Mammary epithelial cell (primary cell): ENCODE measurements at regions of chr15 and their contacts with region 1.

Region 1: DNA sequence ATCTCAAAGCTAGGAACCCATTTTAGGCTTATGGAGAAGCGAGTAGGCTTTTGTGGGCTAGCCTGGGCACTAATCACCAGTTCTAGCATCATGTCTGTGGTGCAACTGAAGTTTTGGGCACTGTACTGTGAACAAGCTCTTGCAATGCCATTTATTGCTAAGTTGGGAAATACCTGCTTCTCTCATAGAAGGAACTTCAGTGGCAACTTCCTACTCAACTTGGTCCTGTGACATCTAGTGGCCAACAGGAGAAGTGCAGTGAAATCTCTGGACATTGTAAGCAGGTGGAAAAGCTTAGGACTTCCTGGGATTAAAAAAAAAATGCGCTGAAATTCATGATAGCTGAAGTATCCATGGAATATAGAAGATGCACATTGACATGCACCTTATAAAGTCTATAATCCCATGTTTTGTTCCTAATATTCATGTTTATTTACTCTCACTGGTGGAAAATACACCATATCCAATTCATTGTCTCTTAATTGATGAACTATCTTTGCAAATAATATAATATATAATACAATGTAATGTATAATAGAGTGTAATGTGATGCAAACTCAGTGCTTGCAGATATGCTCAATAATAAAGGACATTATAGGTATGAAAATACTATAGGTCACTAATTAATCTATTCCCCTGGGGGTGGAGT is 6.5 kb upstream of the ALDH1A3 start:
- DNase-seq: peak; percentile 85
- H3K4me3 ChIP-seq: no peak overlapping the region
- H3K27ac ChIP-seq: no peak overlapping the region
- H3K4me1 ChIP-seq: peaks cover 13% of the 10 kb centered on the region
- H3K27me3 ChIP-seq: no peaks in the 10 kb centered on the region
- CTCF ChIP-seq: peak; percentile 89 to 92

Region 2: DNA sequence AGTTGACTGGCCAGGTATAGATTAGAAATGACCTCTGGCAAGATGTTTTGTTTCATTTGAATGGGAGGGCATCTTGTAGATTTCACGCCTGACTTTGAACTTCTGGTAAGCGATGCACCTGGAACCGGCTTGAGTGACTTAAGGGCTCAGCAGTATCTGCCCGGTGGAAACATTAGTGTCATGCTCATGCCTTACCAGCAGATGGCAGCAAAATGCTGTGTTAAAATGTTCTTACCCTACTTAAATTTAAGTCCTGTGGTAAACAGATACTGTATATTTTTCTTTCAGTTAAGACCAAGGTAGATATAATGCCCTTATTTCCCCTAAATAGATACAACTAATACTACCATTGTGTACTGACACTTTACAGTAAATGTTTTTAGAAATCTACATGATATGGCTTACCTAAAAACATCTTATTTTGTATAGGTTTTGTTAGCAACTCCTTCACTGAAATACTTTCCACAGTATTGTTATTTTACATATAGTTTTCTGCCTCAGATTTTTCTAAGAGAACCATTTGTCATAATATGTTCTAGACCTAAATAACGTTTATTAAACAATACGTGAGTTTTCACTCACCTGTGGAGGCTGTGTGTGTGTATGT is 245.3 kb before region 1 on chr15:
- CTCF ChIA-PET with region 1: no interaction called
- dilution Hi-C with region 1: no loop called
- in situ Hi-C with region 1: loop called in 1 of 2 experiments (anchors 10 kb)
- intact Hi-C with region 1: loop called (anchors 1 kb)
- DNase-seq: peak; percentile 64
- H3K4me3 ChIP-seq: no peak overlapping the region
- H3K27ac ChIP-seq: peak overlapping the region; percentile 5
- H3K4me1 ChIP-seq: no peaks in the 10 kb centered on the region
- H3K27me3 ChIP-seq: no peaks in the 10 kb centered on the region
- CTCF ChIP-seq: peak; percentile 73

Region 3: DNA sequence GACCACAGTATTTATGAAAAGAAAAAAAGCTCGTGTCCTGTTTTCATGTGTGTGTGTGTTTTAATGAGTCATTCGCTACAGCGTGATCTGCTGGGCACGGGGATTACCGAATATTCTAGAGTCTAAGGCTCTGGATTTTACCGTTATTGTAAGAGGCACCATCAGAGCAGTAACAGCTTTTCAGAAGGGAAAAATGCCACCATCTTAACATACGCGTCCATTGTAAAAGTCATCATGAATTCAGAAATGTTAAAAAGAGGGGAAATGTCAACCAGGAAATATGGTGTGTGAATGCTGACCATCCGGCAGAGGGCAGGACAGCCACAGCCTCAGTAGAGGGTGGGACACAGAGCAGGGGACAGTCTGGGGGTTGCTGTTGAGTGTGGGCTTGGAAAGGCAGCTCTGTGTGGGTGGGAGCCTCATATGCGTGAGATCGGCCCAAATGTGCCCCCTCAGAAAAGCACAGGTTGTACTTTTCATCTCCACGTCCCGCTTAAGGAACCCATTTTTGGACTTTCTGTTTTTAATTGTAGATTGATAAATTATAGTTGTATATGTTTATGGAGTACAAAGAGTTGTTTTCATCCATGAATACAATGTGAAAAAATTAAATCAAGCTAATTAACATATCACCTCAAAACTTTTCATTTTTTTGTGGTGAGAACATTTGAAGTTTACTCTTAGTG is 201.2 kb before region 1 on chr15:
- CTCF ChIA-PET with region 1: no interaction called
- dilution Hi-C with region 1: no loop called
- in situ Hi-C with region 1: no loop called
- intact Hi-C with region 1: loop called (anchors 1 kb)
- DNase-seq: peak; percentile 49
- H3K4me3 ChIP-seq: no peak overlapping the region
- H3K27ac ChIP-seq: peak overlapping the region; percentile 37
- H3K4me1 ChIP-seq: peaks cover 7% of the 10 kb centered on the region
- H3K27me3 ChIP-seq: no peaks in the 10 kb centered on the region
- CTCF ChIP-seq: peak; percentile 44 to 66

Region 4: DNA sequence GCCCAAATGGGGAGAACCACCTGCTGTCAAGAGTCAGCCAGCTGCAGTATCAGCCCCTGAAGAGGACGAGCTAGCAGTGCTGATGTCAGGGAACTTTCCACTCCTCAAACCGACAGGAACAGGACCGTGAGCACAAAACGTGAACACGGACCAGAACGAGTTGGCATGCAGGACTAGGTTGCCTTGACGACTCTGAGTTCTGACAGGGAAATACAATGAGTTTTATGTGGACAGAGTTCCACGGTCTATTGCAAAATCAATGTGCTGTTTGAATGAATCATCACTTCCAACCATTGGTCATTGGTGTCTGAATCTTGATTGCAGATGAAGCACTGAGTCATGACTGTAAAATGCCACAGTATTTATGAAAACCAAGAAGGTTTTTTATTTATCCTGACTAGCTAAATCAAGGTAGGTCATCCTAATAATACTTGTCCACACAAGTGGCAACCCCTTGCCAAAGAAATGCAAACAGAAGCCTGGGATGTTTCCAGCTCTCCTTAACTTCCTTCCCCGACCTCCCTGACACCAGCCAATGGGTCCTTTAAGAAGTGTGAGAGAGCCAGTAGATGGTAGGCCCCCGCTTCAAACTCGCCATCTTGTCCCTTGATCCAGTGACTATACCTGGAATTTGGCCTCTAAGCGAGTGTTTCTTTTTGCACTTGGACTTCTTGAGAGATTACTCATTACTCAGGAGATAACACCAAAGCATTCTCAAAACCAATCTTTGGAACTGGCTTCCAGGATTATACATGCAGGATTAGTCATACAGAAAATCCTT is 151.2 kb before region 1 on chr15:
- CTCF ChIA-PET with region 1: interaction called, 4 read pairs
- dilution Hi-C with region 1: no loop called
- in situ Hi-C with region 1: loop called in 1 of 2 experiments (anchors 10 kb)
- intact Hi-C with region 1: loop called (anchors 1 kb)
- DNase-seq: peak; percentile 100
- H3K4me3 ChIP-seq: peak overlapping the region in 1 of 3 experiments; percentile 15
- H3K27ac ChIP-seq: peak overlapping the region; percentile 100
- H3K4me1 ChIP-seq: peaks cover 59% of the 10 kb centered on the region
- H3K27me3 ChIP-seq: no peaks in the 10 kb centered on the region
- CTCF ChIP-seq: no peak

Region 5: DNA sequence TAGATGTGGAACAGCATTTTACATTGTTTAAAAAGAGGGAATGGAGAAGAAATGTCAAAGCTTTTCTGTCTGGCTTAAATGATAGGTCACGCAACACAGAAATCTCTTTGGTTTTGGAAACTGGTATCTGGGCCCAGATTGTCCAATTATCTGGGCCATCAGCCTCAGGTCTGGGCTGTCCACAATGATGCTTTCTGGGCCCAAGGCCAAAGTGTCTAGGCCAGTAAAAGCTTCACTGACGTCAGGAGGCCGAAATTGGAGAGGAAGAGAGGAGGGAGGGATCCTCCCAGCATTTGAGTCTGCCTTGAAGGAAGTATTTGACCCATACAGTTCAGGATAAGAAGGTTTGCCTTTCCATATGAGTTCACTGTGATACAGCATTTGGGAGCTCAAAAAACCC is 54.2 kb before region 1 on chr15:
- CTCF ChIA-PET with region 1: no interaction called
- dilution Hi-C with region 1: no loop called
- in situ Hi-C with region 1: no loop called
- intact Hi-C with region 1: no loop called
- DNase-seq: no peak
- H3K4me3 ChIP-seq: no peak overlapping the region
- H3K27ac ChIP-seq: no peak overlapping the region
- H3K4me1 ChIP-seq: no peaks in the 10 kb centered on the region
- H3K27me3 ChIP-seq: no peaks in the 10 kb centered on the region
- CTCF ChIP-seq: no peak

Region 6: GRCh38 chr15:100918034-100918689 is 45.0 kb after region 1 on chr15:
- CTCF ChIA-PET with region 1: no interaction called
- dilution Hi-C with region 1: no loop called
- in situ Hi-C with region 1: no loop called
- intact Hi-C with region 1: loop called (anchors 2 kb)
- DNase-seq: peak; percentile 77
- H3K4me3 ChIP-seq: peak overlapping the region; percentile 64 to 72 (median 67)
- H3K27ac ChIP-seq: peak overlapping the region; percentile 48
- H3K4me1 ChIP-seq: peaks cover 39% of the 10 kb centered on the region
- H3K27me3 ChIP-seq: no peaks in the 10 kb centered on the region
- CTCF ChIP-seq: peak; percentile 83 to 94

Region 7: GRCh38 chr15:101008158-101009139 is 135.3 kb after region 1 on chr15:
- CTCF ChIA-PET with region 1: interaction called, 4 read pairs
- dilution Hi-C with region 1: no loop called
- in situ Hi-C with region 1: no loop called
- intact Hi-C with region 1: loop called (anchors 2 kb)
- DNase-seq: peak; percentile 82
- H3K4me3 ChIP-seq: peak overlapping the region; percentile 52 to 72 (median 64)
- H3K27ac ChIP-seq: no peak overlapping the region
- H3K4me1 ChIP-seq: peaks cover 24% of the 10 kb centered on the region
- H3K27me3 ChIP-seq: no peaks in the 10 kb centered on the region
- CTCF ChIP-seq: peak; percentile 93 to 99